Right ventricle myocardium superior (tissue), 1 donor: ENCODE measurements at regions of chr6 and their contacts with region 1.

Region 1: GRCh38 chr6:5143634-5144311 is 58.6 kb downstream of the PPP1R3G start:
- DNase-seq: peak; percentile 93
- ATAC-seq: peak; percentile 93

Region 2: GRCh38 chr6:5203546-5203945 is 59.8 kb after region 1 on chr6:
- intact Hi-C with region 1: no loop called
- DNase-seq: no peak
- ATAC-seq: no peak

Region 3: DNA sequence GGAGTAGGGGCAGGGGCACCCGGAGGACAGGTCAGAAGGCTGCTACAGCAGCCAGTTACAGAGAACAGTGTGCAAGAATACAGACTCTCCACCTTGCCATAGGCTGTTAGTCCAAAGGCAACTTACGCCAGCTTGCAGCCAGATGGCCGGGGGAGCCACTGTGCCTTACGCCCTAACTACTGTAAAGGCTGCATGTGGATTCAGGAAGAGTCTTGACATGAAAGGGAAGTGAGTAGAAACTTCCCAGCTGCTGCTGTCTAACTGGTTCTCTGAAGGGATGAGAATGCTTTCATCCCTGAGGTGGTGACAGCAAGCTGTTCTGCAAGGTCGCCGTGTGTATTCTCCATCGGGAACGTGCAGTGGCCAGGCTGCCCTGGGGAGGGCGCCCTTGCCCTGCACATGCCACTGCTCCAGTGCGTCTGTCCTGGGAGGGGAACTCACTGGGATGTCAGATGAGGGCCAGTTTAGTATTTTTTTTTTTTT is 70.8 kb after region 1 on chr6:
- intact Hi-C with region 1: loop called (anchors 10 kb)
- DNase-seq: peak; percentile 61
- ATAC-seq: peak; percentile 91

Region 4: GRCh38 chr6:5260661-5261544 is 117.1 kb after region 1 on chr6 and contains the starts of genes FARS2 and LYRM4:
- intact Hi-C with region 1: loop called (anchors 5 kb)
- DNase-seq: peak; percentile 95
- ATAC-seq: peak; percentile 99
- total RNA-seq, gene FARS2: 20.8 TPM
- total RNA-seq, gene LYRM4: 26.2 TPM

Region 5: DNA sequence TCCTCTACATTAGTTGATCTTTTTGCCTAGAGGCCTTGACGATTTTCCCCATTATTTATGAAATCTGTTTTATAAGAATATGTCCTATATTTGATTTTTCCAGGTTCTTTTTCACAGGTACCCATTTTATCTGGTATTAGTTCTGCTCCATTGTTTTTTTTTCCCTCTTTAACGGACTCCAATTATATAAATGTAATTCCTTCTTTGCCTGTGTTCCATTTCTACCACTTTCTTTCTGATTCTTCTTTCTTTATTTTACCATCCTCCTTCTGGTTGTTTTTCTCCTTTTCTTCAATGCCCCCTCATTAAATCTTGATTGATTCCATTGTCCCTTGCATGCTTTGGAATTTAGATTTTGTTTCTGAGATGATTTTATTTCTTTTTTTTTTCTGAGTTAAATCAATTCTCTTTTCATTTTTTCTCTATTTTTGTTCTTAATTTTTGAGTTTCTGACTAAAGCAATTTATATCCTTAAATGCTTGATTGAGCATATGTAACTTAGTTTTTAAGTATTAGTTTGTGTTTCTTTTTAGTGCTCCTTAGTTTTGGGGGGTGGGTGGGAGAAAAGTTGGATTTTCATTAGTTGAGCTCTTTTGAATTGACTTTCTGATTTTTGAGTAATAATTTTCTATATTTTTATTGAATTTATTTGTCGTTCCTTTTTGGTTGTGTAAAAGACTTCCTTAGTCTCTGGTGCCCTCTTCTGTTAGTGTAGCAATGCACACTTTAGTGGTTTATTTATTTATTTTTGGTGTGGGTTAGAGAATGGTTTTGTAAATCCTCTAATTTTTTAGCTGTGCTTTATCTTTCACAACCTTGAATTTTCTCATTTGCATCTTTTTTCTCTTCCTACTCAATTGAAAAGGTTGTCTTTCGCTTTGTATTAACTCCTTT is 258.3 kb after region 1 on chr6:
- intact Hi-C with region 1: loop called (anchors 5 kb)
- DNase-seq: no peak
- ATAC-seq: no peak

Region 6: DNA sequence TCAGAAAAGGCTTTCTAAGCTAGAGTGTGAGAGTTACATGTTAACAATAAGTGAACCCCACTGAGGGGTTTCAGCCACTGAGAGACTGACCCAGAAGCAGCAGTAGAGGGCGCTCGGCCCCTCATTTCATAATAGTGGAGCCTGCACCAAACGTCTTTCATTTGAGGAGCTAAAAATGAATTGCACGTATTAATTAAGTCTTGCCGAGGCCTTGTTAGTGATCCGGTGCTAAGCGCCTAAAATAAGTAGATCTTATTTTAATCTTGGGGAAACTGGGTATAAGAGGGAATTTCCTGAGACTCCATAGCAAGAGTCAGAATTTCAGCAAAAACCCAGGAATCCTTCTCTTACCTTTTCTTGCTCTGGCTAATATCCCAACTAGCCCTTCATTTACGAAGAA is 327.3 kb after region 1 on chr6:
- intact Hi-C with region 1: no loop called
- DNase-seq: peak; percentile 75
- ATAC-seq: peak; percentile 92